ENCODE measurements at regions of chr1 and their contacts with region 1.

Region 1: DNA sequence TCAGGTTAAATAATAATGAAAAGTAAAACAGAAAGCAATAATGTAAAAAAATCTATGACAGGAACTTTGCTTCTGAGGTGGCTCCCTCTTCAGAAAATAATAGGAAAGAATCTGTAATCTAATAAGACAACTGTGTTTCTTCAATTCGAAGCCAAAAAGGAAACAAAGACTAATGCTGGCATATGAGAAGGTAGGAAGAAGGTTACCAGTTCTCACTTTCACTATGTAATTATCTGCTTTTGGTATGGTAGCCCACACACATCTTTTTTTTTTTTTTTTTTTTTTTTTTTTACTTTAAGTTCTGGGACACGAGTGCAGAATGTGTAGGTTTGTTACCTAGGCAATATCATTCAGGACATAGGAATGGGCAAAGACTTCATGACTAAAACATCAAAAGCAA is 47.1 kb downstream of the COP1 start:
- DNase-seq: no peak
- H3K4me3 Mint-ChIP-seq: peak overlapping the region; percentile 17
- H3K27ac Mint-ChIP-seq: peak overlapping the region; percentile 85
- H3K4me1 Mint-ChIP-seq: peaks cover 26% of the 10 kb centered on the region
- H3K27me3 Mint-ChIP-seq: no peaks in the 10 kb centered on the region

Region 2: DNA sequence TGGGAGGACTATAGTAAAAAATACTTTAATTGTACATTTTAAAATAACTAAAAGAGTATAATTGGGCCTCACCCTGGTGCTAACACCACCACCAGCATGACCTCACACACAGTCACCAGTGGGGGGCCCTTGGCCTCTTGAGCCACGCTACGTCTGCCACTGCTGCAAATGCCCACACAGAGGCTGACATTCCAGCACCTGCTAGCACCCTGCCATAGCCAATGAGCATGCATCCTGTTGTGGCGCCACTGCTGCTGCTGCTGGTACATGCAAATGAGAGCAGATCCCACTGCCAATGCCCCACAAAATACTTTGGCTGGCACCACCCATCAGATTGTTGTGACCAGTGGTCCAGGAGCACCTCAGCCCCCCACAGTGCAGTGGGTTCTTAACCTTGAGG is 385.1 kb before region 1 on chr1:
- intact Hi-C with region 1: no loop called
- DNase-seq: no peak
- H3K4me3 Mint-ChIP-seq: no peak overlapping the region
- H3K27ac Mint-ChIP-seq: no peak overlapping the region
- H3K4me1 Mint-ChIP-seq: no peaks in the 10 kb centered on the region
- H3K27me3 Mint-ChIP-seq: peaks cover 6% of the 10 kb centered on the region

Region 3: DNA sequence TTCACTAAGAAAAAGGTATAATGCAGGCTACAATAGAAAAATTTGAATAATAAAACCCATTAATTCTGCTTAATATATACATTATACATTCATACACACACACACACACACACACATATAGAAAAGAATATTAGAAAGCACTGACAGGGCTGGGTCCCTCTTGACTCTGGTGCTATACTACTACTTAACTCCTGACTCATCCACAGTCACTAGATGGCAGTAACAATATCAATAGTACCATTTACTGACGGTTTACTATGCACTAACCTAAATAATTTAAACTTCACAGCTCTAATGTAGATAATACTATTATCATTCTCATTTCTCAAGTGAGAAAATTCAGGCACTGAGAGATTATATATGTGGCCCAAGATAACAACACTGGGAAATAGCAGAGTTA is 40.4 kb before region 1 on chr1:
- intact Hi-C with region 1: loop called (anchors 5 kb)
- DNase-seq: no peak
- H3K4me3 Mint-ChIP-seq: no peak overlapping the region
- H3K27ac Mint-ChIP-seq: no peak overlapping the region
- H3K4me1 Mint-ChIP-seq: no peaks in the 10 kb centered on the region
- H3K27me3 Mint-ChIP-seq: no peaks in the 10 kb centered on the region

Region 4: GRCh38 chr1:176193023-176193422 is 33.0 kb after region 1 on chr1:
- intact Hi-C with region 1: loop called (anchors 1 kb)
- DNase-seq: no peak
- H3K4me3 Mint-ChIP-seq: no peak overlapping the region
- H3K27ac Mint-ChIP-seq: peak overlapping the region; percentile 2
- H3K4me1 Mint-ChIP-seq: peaks cover 37% of the 10 kb centered on the region
- H3K27me3 Mint-ChIP-seq: no peaks in the 10 kb centered on the region

Measured in activated CD4-positive, alpha-beta T cell treated with anti-CD3 and anti-CD28 coated beads, Interleukin-2, amount 10 ng/mL, durations not matched to agents 24 days and 14 days (primary cell).